ENCODE measurements at regions of chr2 and their contacts with region 1.

Region 1: GRCh38 chr2:237682856-237683670 is 55.7 kb downstream of the LRRFIP1 start:
- DNase-seq: no peak
- H3K4me3 ChIP-seq: no peak overlapping the region
- CTCF ChIP-seq: no peak

Region 2: GRCh38 chr2:237603718-237604362 is 79.2 kb before region 1 on chr2:
- in situ Hi-C with region 1: loop called (anchors 5 kb)
- DNase-seq: no peak
- H3K4me3 ChIP-seq: no peak overlapping the region
- CTCF ChIP-seq: no peak

Region 3: DNA sequence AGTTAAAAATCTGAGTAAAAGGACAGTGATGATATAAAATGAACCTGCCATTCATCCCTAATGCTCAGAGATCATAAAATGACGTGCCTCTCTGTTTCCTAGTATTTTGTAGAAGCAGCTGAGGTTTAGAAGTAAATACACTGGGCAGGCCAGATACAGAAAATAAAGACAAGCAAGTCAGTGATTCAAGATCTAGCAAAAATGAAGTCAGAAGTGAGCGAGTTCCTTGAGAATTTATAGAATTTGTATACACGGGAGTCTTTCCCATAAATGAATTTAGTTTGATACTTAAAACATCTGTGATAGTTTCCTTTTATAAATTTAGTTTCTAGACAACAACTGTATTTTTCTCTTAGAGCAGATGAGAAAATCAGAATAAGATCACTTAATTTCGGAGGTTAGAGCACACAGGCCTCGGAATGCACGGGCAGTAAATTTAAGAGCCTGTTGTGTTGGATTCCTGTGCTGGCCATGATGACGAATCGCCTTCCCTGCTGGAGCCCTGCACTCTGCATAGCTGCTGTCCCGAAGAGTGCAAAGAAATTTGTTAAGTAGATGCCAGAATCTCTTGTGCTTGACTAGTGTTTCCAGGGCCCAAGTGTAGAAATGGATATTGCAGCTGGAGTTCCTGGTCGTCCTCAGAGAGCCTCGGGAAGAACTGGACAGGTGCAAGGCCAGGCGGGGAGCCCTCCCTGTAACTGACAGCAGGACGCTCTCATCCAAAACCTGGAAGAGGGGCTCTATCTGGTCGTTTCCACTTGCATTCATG is 31.8 kb after region 1 on chr2:
- in situ Hi-C with region 1: no loop called
- DNase-seq: peak; percentile 79
- H3K4me3 ChIP-seq: peak overlapping the region; percentile 1
- CTCF ChIP-seq: no peak

Region 4: DNA sequence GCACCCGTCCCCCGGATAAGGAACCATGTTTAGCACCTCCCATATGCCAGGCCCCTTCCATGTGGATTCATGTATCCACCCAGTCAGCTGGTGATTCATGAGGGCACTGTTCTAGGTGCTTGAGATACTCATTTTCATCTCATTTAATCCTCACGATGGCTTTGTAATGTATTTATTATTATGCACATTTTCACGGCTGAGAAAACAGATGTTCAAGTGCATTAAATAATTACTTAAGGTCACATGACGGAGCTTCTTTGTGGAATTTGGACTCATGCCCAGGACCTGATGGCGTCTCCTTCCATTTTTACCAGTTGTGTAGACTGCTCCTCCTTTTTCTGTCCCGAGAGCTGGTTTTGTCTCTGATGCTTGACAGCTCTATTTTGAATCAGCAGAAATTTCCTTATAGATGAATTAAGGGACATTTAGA is 43.4 kb after region 1 on chr2:
- in situ Hi-C with region 1: loop called (anchors 5 kb)
- DNase-seq: peak; percentile 67
- H3K4me3 ChIP-seq: no peak overlapping the region
- CTCF ChIP-seq: no peak

Region 5: DNA sequence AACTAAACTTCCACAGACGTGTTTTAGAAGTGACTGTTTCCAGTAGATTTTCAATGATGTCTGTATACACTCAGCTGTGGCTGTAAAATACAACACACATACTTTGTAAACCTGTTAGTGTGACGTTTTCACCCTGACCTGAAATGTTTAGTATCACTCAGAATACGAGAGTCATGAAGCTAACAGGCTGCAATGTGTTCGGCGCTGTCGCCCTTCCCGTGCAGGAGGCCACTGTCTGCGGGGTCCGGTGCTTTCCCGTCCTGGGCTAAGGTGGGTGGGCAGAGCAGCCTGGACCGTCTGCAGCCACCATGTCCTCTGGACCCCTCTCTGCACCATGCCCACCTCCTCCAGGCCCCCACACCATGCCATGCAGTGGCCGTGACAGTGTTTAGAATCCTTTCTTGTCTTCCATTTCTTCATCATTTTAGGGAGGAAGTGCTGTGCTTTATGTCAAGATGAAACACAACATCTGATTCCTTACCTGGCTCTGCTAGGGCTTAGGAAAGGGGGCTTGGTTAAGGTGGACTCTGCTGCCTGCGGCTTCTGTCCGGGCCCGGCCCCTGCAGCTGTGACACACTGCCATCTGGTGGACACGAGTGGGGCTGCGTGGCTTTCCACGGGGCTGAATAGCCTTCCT is 61.7 kb after region 1 on chr2:
- in situ Hi-C with region 1: no loop called
- DNase-seq: peak; percentile 29
- H3K4me3 ChIP-seq: no peak overlapping the region
- CTCF ChIP-seq: peak; percentile 98